Activated naive CD4-positive, alpha-beta T cell treated with anti-CD3 and anti-CD28 coated beads for 36 hours (primary cell): ENCODE measurements at regions of chr13 and their contacts with region 1.

Region 1: GRCh38 chr13:35818633-35819067 is 312.5 kb downstream of the DCLK1 start:
- DNase-seq: no peak
- H3K4me3 Mint-ChIP-seq: no peak overlapping the region
- H3K27ac Mint-ChIP-seq: no peak overlapping the region
- H3K4me1 Mint-ChIP-seq: no peaks in the 10 kb centered on the region
- H3K27me3 Mint-ChIP-seq: peaks cover 1% of the 10 kb centered on the region

Region 2: DNA sequence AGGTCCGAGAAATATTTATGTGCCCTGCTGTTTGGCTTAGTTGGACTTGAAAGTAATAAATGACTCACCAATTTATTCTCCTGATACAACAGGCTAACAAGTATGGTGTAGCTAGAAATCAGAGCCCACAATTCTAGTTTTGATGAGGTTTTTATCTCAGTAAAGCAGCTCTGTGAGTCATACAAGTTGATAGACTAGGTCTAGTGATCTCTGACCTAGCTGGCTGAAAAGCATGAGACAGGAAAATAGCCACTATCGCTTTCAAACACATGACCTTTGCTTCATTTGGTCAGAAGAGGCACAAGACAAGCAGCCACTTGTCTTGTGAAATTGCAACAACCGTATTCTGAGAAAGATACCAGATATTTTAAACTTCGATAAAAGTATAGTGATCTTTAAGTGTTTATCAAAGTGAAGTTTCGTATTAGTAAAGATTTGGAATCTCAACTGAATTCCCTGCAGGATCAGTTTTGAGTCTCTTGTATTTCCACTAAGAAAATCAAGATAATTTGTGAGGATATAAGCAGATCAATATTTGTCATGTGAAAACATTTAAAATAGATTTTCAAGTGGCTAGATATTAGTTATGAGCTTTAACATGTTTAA is 468.9 kb before region 1 on chr13:
- CTCF ChIA-PET with region 1: no interaction called
- intact Hi-C with region 1: no loop called
- DNase-seq: no peak
- H3K4me3 Mint-ChIP-seq: no peak overlapping the region
- H3K27ac Mint-ChIP-seq: no peak overlapping the region
- H3K4me1 Mint-ChIP-seq: no peaks in the 10 kb centered on the region
- H3K27me3 Mint-ChIP-seq: no peaks in the 10 kb centered on the region

Region 3: DNA sequence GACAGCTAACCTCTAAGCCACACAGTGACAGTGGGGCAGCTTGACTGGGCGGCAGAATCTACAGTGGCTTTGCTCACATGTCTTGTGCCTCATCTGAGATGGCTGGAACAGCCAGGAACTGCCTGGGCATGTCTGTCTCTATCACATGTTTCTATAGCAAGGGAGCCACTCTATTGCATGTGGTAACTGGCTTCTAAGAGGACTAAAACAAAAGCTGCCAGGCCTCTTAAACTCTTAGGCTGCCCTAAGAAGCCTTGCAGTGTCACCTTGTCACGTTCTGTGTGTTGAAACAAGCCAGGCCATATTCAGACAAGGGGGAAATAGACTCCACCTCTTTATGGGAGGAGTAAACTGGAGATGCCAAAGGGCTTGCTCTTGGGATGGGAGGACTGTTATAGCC is 219.3 kb before region 1 on chr13:
- CTCF ChIA-PET with region 1: no interaction called
- intact Hi-C with region 1: no loop called
- DNase-seq: no peak
- H3K4me3 Mint-ChIP-seq: no peak overlapping the region
- H3K27ac Mint-ChIP-seq: peak overlapping the region; percentile 9
- H3K4me1 Mint-ChIP-seq: no peaks in the 10 kb centered on the region
- H3K27me3 Mint-ChIP-seq: no peaks in the 10 kb centered on the region

Region 4: GRCh38 chr13:35630551-35631275 is 187.9 kb before region 1 on chr13:
- CTCF ChIA-PET with region 1: no interaction called
- intact Hi-C with region 1: loop called (anchors 10 kb)
- DNase-seq: no peak
- H3K4me3 Mint-ChIP-seq: no peak overlapping the region
- H3K27ac Mint-ChIP-seq: no peak overlapping the region
- H3K4me1 Mint-ChIP-seq: no peaks in the 10 kb centered on the region
- H3K27me3 Mint-ChIP-seq: no peaks in the 10 kb centered on the region

Region 5: GRCh38 chr13:35953537-35954206 is 135.0 kb after region 1 on chr13:
- CTCF ChIA-PET with region 1: no interaction called
- intact Hi-C with region 1: loop called (anchors 10 kb)
- DNase-seq: no peak
- H3K4me3 Mint-ChIP-seq: no peak overlapping the region
- H3K27ac Mint-ChIP-seq: no peak overlapping the region
- H3K4me1 Mint-ChIP-seq: no peaks in the 10 kb centered on the region
- H3K27me3 Mint-ChIP-seq: no peaks in the 10 kb centered on the region